Endothelial cell of umbilical vein (primary cell): ENCODE measurements at regions of chr3 and their contacts with region 1.

Region 1: DNA sequence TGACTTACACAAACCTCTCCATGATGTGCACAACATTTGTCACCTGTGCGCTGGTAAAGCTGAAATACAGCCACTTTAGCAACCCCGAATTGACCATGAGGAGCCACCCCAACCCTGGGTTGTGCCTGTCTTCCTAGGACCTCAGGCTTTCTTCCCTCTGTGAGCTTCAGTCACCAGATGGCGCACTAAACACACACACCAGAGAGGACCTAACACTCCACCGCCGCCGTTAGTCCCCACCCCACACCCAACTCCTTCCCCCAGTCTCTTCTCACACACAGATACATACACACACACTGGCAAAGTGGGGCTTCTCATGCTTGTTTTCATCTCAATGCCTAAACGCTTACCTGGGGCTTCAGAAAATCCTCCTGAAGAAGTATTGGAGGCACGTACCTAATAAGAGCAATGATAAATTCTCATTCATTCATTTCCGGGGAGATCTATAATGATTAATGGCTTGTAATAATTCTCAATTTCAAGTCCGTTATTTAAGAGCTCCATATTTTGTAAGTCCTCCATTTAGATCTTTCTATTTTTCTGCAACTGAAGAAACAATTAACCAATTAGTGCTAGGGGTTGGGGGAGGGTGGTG is 2.1 kb upstream of the CCDC80 start:
- DNase-seq: peak; percentile 83
- H3K4me3 ChIP-seq: peak overlapping the region in 1 of 3 experiments; percentile 12
- H3K27ac ChIP-seq: no peak overlapping the region
- H3K4me1 ChIP-seq: peaks cover 28% of the 10 kb centered on the region
- H3K27me3 ChIP-seq: no peaks in the 10 kb centered on the region
- CTCF ChIP-seq: peak; percentile 82 to 86
- POLR2A ChIP-seq: no peak

Region 2: DNA sequence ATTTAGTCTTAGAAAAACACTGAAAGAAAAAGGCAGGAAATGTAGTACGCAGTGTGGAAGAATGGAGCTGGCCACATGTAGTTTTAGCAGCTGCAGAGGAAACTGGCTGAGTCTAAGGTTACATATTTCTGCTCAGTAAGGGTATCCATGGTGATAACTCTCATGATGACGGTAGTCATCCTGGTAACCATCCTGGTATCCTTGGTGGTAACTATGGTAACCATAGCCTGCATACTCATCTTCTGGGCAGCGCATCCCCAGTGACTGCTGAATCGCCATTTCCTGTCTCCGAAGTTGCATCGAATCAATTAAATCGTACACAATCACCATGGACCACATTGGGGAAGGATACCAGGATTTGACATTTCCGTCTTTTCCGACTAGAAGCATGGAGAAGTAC is 37.7 kb before region 1 on chr3:
- CTCF ChIA-PET with region 1: interaction called, 20 read pairs
- POLR2A ChIA-PET with region 1: interaction called, 12 read pairs
- dilution Hi-C with region 1: no loop called
- intact Hi-C with region 1: loop called (anchors 1 kb)
- DNase-seq: peak; percentile 98
- H3K4me3 ChIP-seq: peak overlapping the region in 1 of 3 experiments; percentile 38
- H3K27ac ChIP-seq: peak overlapping the region; percentile 94
- H3K4me1 ChIP-seq: peaks cover 17% of the 10 kb centered on the region
- H3K27me3 ChIP-seq: no peaks in the 10 kb centered on the region
- CTCF ChIP-seq: no peak
- POLR2A ChIP-seq: no peak

Region 3: GRCh38 chr3:112699436-112699978 is 56.5 kb after region 1 on chr3:
- CTCF ChIA-PET with region 1: interaction called, 8 read pairs
- POLR2A ChIA-PET with region 1: no interaction called
- dilution Hi-C with region 1: no loop called
- intact Hi-C with region 1: loop called (anchors 1 kb)
- DNase-seq: peak; percentile 50
- H3K4me3 ChIP-seq: no peak overlapping the region
- H3K27ac ChIP-seq: no peak overlapping the region
- H3K4me1 ChIP-seq: peaks cover 4% of the 10 kb centered on the region
- H3K27me3 ChIP-seq: no peaks in the 10 kb centered on the region
- CTCF ChIP-seq: peak; percentile 14 to 16
- POLR2A ChIP-seq: no peak

Region 4: DNA sequence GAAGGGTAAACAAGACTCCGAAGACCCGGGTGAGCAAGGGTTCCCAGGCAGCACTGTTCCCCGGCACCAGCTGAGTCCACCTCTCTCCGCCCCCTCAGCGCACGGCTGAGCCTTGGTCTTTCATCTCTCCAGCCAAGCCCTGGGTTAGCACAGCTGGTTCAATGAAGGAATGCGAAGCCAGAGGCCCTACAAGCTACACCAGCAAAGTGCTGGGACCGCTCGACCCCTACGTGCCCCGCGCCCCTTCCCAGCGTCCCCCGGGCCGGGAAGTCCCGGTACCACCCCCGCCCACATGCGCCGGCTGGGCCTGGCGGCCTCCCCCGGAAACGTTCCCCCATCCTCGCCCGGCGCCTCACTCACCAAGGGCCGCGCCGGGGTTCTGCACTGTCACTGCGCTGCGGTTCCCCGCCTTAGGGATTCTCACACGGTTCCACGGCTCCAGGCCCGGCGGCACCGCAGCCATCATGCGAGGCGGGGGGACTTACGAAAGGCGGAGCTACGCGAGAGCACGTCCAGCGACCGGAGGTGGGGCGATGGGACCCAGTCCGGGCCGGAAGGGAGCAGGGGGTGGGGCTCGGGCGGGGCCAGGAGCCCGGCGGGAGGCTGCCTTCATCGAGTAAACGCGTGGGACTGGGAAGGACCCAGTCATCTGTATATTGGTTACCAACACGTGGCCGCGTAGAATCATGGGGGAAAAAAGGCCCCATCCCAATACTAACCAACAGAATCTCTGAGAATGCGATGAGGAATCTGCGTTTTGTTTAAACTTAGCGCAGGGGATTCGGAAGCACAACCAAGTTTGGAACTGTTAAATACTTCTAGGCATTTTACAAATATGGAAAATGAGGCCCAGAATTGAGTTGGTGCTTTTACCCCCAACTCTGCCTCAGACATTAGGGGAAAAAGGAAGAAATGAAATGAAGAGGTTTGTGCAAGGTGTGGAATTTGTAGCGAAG is 376.5 kb after region 1 on chr3:
- CTCF ChIA-PET with region 1: interaction called, 6 read pairs
- POLR2A ChIA-PET with region 1: interaction called, 3 read pairs
- dilution Hi-C with region 1: no loop called
- intact Hi-C with region 1: loop called (anchors 1 kb)
- DNase-seq: peak; percentile 91
- H3K4me3 ChIP-seq: peak overlapping the region; percentile 83 to 91 (median 83)
- H3K27ac ChIP-seq: peak overlapping the region; percentile 75
- H3K4me1 ChIP-seq: peaks cover 16% of the 10 kb centered on the region
- H3K27me3 ChIP-seq: no peaks in the 10 kb centered on the region
- CTCF ChIP-seq: no peak
- POLR2A ChIP-seq: peak; percentile 75

Region 5: GRCh38 chr3:113287803-113288648 is 645.0 kb after region 1 on chr3:
- CTCF ChIA-PET with region 1: interaction called, 22 read pairs
- POLR2A ChIA-PET with region 1: no interaction called
- dilution Hi-C with region 1: no loop called
- intact Hi-C with region 1: loop called (anchors 1 kb)
- DNase-seq: peak; percentile 75
- H3K4me3 ChIP-seq: no peak overlapping the region
- H3K27ac ChIP-seq: no peak overlapping the region
- H3K4me1 ChIP-seq: peaks cover 8% of the 10 kb centered on the region
- H3K27me3 ChIP-seq: no peaks in the 10 kb centered on the region
- CTCF ChIP-seq: peak; percentile 89 to 95
- POLR2A ChIP-seq: no peak